Right lobe of liver (tissue), 6 donors: ENCODE measurements at regions of chr13 and their contacts with region 1.

Region 1: GRCh38 chr13:81929988-81930387 is 1589.1 kb upstream of the SPRY2 start:
- DNase-seq: no peak
- ATAC-seq: peak; percentile 56 to 79 (median 72)
- H3K4me3 ChIP-seq: no peak overlapping the region
- H3K27ac ChIP-seq: no peak overlapping the region
- H3K4me1 ChIP-seq: no peaks in the 10 kb centered on the region
- H3K27me3 ChIP-seq: no peaks in the 10 kb centered on the region
- CTCF ChIP-seq: peak; percentile 36 to 56 (median 42)
- POLR2A ChIP-seq: no peak

Region 2: GRCh38 chr13:82323096-82323495 is 393.1 kb after region 1 on chr13:
- intact Hi-C with region 1: loop called in 1 of 2 experiments (anchors 10 kb)
- DNase-seq: no peak
- ATAC-seq: no peak
- H3K4me3 ChIP-seq: no peak overlapping the region
- H3K27ac ChIP-seq: no peak overlapping the region
- H3K4me1 ChIP-seq: no peaks in the 10 kb centered on the region
- H3K27me3 ChIP-seq: no peaks in the 10 kb centered on the region
- CTCF ChIP-seq: no peak
- POLR2A ChIP-seq: no peak